Activated CD4-positive, alpha-beta T cell treated with anti-CD3 and anti-CD28 coated beads for 36 hours (primary cell): ENCODE measurements at regions of chr11 and their contacts with region 1.

Region 1: DNA sequence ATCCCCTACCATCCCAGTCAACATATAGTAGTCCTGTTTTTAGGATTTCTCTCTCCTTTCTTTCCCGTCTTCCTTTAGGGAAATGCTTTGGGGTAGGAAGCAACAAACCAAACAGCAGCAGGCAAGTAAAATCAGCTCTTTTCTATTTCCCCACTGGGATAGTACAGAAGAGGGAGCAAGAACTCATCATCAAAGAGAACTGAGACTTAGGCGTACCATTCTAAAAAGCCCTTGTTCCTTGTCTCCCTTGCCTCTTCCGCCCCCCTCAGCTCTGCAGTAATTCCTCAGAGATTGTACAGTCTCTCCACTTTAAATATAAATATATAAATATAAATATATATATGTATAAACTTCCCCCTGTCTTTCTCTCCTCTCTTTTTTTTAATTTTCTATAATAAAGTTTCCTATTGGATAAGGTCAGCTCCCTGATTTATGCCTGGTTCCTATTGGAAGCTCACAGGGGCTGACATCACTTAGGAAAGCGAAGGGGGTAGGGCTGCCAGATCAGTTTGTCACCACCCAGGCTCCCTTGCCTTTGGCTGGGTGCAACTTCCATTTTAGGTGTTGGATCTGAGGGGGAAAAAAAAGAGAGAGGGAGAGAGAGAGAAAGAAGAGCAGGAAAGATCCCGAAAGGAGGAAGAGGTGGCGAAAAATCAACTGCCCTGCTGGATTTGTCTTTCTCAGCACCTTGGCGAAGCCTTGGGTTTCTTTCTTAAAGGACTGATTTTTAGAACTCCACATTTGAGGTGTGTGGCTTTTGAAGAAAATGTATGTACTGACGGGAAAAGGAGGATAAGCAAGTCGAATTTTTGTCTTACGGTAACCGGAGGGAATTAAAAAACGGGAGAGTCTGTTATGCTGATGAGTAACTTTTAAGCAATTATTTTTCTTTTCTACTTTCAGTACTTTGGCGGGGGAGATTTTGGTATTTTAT is at the start of gene CTNND1:
- DNase-seq: peak; percentile 30
- ATAC-seq: peak; percentile 59
- H3K4me3 Mint-ChIP-seq: peak within 1 kb of the TSS; percentile 69
- H3K27ac Mint-ChIP-seq: peak within 1 kb of the TSS; percentile 32
- H3K4me1 Mint-ChIP-seq: peaks cover 37% of the 10 kb centered on the region
- H3K27me3 Mint-ChIP-seq: no peaks in the 10 kb centered on the region
- total RNA-seq, gene CTNND1: 6.7 to 7.4 TPM

Region 2: DNA sequence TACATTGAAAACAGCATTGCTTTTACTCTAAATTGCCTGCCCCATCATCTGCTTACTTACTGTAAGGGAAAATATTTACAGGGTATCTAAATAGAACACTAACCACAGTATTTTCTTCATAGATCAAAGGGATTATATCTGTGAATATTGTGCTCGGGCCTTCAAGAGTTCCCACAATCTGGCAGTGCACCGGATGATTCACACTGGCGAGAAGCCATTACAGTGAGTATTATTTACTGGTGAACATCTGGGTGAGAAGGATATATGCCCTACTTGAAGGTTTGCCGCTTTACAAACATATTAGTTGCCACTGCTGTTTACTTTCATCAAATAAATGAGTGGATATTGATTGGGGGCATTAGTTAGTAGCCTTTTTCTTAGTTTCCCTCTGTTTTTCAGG is 855.0 kb after region 1 on chr11:
- CTCF ChIA-PET with region 1: no interaction called
- POLR2A ChIA-PET with region 1: interaction called, 12 read pairs
- intact Hi-C with region 1: no loop called
- DNase-seq: no peak
- ATAC-seq: no peak
- H3K4me3 Mint-ChIP-seq: no peak overlapping the region
- H3K27ac Mint-ChIP-seq: peak overlapping the region; percentile 13
- H3K4me1 Mint-ChIP-seq: peaks cover 34% of the 10 kb centered on the region
- H3K27me3 Mint-ChIP-seq: no peaks in the 10 kb centered on the region